Caco-2 (cell line): ENCODE measurements at regions of chr13 and their contacts with region 1.

Region 1: GRCh38 chr13:78121459-78122348 is 203.1 kb upstream of the EDNRB start:
- DNase-seq: peak; percentile 42 to 55
- H3K4me3 ChIP-seq: no peak overlapping the region
- H3K4me3 Mint-ChIP-seq: no peak overlapping the region
- H3K27ac Mint-ChIP-seq: no peak overlapping the region
- H3K4me1 ChIP-seq: no peaks in the 10 kb centered on the region
- H3K4me1 Mint-ChIP-seq: no peaks in the 10 kb centered on the region
- H3K27me3 ChIP-seq: no peaks in the 10 kb centered on the region
- H3K27me3 Mint-ChIP-seq: peaks cover 15% of the 10 kb centered on the region
- CTCF ChIP-seq: peak; percentile 83 to 87

Region 2: DNA sequence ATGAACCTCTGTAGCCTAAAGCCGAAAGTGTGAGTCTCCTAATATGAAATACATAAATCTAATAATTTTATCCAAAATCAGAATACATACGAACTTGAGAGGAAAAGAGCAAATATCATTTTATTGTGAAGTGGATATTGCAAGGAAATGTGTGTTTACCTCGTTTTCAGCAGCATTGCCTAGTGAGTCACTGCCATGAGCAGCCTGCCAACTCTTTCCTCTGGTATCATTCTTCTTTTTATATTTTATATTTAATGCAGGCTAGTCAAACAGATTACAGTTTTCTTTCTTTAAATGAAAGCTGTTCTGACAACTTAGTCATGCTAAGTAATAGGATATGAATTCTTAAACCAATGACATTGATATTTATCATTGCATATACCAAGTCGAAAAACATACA is 247.3 kb before region 1 on chr13:
- CTCF ChIA-PET with region 1: no interaction called
- POLR2A ChIA-PET with region 1: no interaction called
- intact Hi-C with region 1: loop called (anchors 5 kb)
- DNase-seq: no peak
- H3K4me3 ChIP-seq: no peak overlapping the region
- H3K4me3 Mint-ChIP-seq: no peak overlapping the region
- H3K27ac Mint-ChIP-seq: no peak overlapping the region
- H3K4me1 ChIP-seq: no peaks in the 10 kb centered on the region
- H3K4me1 Mint-ChIP-seq: no peaks in the 10 kb centered on the region
- H3K27me3 ChIP-seq: no peaks in the 10 kb centered on the region
- H3K27me3 Mint-ChIP-seq: peaks cover 9% of the 10 kb centered on the region
- CTCF ChIP-seq: no peak

Region 3: DNA sequence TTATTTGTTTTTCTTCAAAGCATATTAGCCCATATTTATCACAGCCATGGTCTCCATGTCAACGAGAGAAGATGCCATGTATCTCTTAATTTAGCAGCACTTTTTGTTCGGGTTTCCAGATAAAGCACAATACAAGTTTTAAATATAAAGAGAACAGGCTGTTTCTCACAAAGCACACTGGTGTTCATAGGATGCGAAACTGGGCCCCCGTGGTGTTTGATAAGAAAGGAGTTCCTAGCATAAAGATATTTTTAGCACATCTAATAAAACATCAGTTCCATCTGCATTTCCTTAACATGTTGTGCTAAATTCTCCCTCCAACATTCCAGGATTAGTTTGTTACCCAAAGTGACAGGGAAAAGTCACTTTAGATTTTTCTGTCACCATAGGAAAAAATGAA is 130.7 kb before region 1 on chr13:
- CTCF ChIA-PET with region 1: no interaction called
- POLR2A ChIA-PET with region 1: no interaction called
- intact Hi-C with region 1: no loop called
- DNase-seq: no peak
- H3K4me3 ChIP-seq: no peak overlapping the region
- H3K4me3 Mint-ChIP-seq: no peak overlapping the region
- H3K27ac Mint-ChIP-seq: no peak overlapping the region
- H3K4me1 ChIP-seq: no peaks in the 10 kb centered on the region
- H3K4me1 Mint-ChIP-seq: no peaks in the 10 kb centered on the region
- H3K27me3 ChIP-seq: no peaks in the 10 kb centered on the region
- H3K27me3 Mint-ChIP-seq: no peaks in the 10 kb centered on the region
- CTCF ChIP-seq: no peak